PC-3 (cell line): ENCODE measurements at regions of chr9 and their contacts with region 1.

Region 1: DNA sequence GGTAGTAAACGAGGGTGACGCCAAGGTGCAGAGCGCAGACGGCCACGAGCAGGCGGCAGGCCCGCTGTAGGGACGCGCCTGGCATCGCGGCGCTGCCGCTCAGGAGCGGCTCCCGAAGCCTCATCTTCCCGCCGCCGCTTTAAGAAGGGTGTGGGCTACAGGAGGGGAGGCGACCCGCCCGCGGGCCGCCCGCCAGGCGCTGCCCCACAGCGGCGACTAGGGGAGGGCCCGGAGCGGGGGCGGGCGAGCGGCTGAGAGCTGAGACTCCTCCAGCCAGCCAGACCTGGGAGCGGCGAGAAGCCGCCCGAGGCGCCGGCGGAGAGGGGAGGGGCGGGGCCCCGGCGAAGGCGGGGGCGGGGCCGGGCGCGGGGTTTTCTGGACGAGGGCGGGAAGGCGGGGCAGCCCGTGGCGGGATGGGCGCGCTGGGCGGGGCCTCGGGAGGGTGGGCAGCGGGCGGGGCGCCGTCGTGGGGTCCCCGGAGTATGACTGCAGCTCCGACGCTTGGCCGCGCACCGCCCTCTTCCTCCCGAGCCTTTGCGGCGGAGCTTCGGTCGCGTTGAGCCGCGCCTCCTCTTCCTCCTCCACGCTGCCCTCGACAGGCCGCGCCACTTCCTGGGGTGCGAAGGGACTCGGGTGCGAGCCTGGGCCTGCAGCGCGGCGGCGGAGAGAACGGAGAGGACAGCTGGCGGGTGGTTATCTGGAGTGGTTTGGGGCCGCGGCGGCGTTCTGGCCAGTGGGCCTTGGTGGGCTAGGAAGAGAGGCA is at the start of gene B4GALT1:
- DNase-seq: peak; percentile 86
- ATAC-seq: peak; percentile 80
- H3K4me3 ChIP-seq: peak within 1 kb of the TSS; percentile 93
- H3K27ac ChIP-seq: peak within 1 kb of the TSS; percentile 53
- H3K4me1 ChIP-seq: peaks cover 42% of the 10 kb centered on the region
- H3K27me3 ChIP-seq: no peaks in the 10 kb centered on the region
- CTCF ChIP-seq: no peak
- total RNA-seq, gene B4GALT1: 14.8 and 23.1 TPM in 2 replicates

Region 2: DNA sequence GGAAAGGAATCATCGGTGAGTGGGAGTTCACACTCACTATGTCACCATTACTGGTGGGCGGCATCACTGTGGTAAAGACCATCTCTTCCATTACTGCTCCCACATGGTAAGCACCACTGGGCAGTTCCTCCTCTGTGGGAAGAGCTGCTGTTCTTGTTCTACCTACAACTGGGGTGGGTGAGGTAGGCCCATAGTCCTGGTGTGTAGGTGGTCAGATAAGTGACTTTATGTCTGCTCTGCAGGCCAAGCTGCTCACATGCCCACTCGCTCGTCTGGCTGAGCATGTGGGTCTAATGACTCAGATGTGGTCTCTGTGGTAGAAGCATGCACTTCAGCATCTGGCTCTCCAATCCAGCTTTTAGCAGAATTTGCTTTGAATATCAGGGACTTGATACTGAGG is 301.0 kb before region 1 on chr9:
- CTCF ChIA-PET with region 1: no interaction called
- POLR2A ChIA-PET with region 1: no interaction called
- intact Hi-C with region 1: no loop called
- DNase-seq: no peak
- ATAC-seq: no peak
- H3K4me3 ChIP-seq: no peak overlapping the region
- H3K27ac ChIP-seq: no peak overlapping the region
- H3K4me1 ChIP-seq: no peaks in the 10 kb centered on the region
- H3K27me3 ChIP-seq: peaks cover 30% of the 10 kb centered on the region; the same call in 1 of the 2 replicates
- CTCF ChIP-seq: no peak

Region 3: DNA sequence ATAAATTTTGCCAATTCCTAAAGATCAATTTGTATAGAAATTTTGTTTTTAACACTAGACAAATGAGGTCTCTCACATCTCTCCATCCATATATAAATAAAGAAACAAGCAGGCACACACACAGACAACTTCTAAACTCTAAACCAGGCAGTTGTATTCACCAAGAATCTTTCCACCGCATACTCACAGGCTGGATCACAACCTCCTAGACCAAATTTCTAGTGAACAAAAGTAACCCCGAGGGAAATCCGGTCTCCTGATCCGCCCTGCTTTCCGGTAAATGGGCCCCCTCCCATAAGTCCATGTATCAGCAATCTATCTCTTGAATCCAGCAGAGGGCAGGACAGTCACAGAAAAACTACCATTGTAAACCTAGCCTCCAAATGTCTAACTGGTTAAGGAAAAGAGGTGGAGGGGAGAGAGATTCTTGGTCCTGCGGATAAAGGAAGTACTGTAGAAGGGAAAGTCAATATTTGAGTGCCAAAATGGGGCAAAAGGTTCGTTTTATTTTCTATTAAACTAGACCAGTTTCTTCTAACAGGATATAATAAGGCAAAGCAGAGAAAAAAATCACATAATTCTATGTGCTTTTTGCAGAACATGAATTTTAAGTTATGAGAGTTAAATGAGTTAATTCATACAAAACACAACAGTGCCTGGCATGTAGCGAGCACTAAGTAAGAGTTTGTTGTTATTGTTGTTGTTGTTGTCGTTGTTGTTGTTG is 85.9 kb before region 1 on chr9:
- CTCF ChIA-PET with region 1: no interaction called
- POLR2A ChIA-PET with region 1: no interaction called
- intact Hi-C with region 1: loop called (anchors 1 kb)
- DNase-seq: peak; percentile 80
- ATAC-seq: peak; percentile 69
- H3K4me3 ChIP-seq: peak overlapping the region; percentile 41; the same call in 1 of the 2 replicates
- H3K27ac ChIP-seq: no peak overlapping the region
- H3K4me1 ChIP-seq: peaks cover 10% of the 10 kb centered on the region
- H3K27me3 ChIP-seq: no peaks in the 10 kb centered on the region
- CTCF ChIP-seq: peak; percentile 85

Region 4: DNA sequence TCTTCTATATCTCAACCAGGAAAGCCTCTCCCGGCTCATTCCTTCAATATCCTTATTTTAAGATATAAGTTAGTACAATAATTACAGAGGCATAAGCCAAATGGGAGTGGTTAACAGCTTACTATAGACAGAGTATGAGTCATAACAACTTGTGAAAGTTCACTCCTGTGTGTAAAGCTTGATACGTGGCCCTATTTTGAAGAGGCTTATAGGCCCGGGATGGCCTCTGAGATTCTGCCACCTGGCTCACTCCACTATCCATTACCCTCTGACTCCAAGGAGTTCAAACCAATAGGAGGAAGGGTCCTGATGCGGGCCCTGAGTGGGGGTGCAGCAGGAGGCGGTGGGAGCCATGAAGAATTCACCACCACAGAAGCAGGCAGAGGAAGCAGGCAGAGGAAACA is 36.7 kb before region 1 on chr9:
- CTCF ChIA-PET with region 1: interaction called, 9 read pairs
- POLR2A ChIA-PET with region 1: interaction called, 24 read pairs
- intact Hi-C with region 1: loop called (anchors 5 kb)
- DNase-seq: peak; percentile 38
- ATAC-seq: peak; percentile 56
- H3K4me3 ChIP-seq: no peak overlapping the region
- H3K27ac ChIP-seq: peak overlapping the region; percentile 16; the same call in 1 of the 2 replicates
- H3K4me1 ChIP-seq: peaks cover 34% of the 10 kb centered on the region
- H3K27me3 ChIP-seq: no peaks in the 10 kb centered on the region
- CTCF ChIP-seq: no peak

Region 5: DNA sequence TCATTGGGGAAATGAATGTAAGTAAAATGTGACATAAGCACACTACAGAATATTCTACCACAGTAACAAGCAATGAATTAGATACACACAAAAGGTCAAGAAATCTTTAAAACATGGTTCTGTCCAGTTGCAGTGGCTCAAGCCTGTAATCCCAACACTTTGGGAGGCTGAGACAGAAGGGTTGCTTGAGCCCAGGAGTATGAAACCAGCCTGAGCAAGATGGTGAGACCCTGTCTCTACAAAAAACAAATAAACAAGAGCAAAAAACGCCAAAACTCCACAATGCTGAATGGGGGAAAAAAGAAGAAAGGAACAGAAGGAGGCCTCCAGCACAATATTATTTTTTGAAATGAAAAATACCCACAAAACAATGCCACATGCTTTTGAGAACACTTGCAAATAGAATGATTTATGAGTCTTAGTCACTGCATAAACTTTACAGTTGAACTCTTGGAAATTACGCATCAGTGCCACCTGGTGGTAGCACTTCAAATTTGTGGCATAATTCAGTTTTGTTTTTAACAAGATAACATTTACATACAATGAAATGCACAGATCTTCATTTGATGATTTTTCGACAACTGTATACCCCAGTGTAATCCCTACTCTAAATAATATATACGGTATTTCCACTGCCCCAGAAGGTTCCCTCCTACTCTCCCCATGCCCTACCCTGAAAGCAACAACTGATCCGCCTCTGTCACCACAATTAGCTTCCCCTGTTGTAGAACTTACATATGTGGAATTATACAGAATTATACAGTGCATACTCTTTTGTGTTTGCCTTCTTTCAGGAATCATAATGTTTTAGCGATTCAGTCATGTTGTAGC is 58.3 kb after region 1 on chr9:
- CTCF ChIA-PET with region 1: no interaction called
- POLR2A ChIA-PET with region 1: no interaction called
- intact Hi-C with region 1: loop called (anchors 1 kb)
- DNase-seq: peak; percentile 85
- ATAC-seq: peak; percentile 26; the same call in 1 of the 2 replicates
- H3K4me3 ChIP-seq: no peak overlapping the region
- H3K27ac ChIP-seq: peak overlapping the region; percentile 58
- H3K4me1 ChIP-seq: peaks cover 28% of the 10 kb centered on the region
- H3K27me3 ChIP-seq: no peaks in the 10 kb centered on the region
- CTCF ChIP-seq: peak; percentile 72